ENCODE measurements at regions of chr21 and their contacts with region 1.

Region 1: GRCh38 chr21:35226948-35227744 is 178.0 kb upstream of the RUNX1 start:
- DNase-seq: no peak
- ATAC-seq: peak; percentile 86
- H3K4me3 Mint-ChIP-seq: peak overlapping the region; percentile 68
- H3K27ac Mint-ChIP-seq: peak overlapping the region; percentile 87
- H3K4me1 Mint-ChIP-seq: peaks cover 44% of the 10 kb centered on the region
- H3K27me3 Mint-ChIP-seq: peaks cover under 1% of the 10 kb centered on the region
- CTCF ChIP-seq: no peak

Region 2: GRCh38 chr21:34986561-34987500 is 240.3 kb before region 1 on chr21:
- CTCF ChIA-PET with region 1: no interaction called
- POLR2A ChIA-PET with region 1: no interaction called
- intact Hi-C with region 1: loop called (anchors 5 kb)
- DNase-seq: peak; percentile 36
- ATAC-seq: peak; percentile 74
- H3K4me3 Mint-ChIP-seq: peak overlapping the region; percentile 69
- H3K27ac Mint-ChIP-seq: peak overlapping the region; percentile 78
- H3K4me1 Mint-ChIP-seq: peaks cover 78% of the 10 kb centered on the region
- H3K27me3 Mint-ChIP-seq: no peaks in the 10 kb centered on the region
- CTCF ChIP-seq: no peak

Region 3: DNA sequence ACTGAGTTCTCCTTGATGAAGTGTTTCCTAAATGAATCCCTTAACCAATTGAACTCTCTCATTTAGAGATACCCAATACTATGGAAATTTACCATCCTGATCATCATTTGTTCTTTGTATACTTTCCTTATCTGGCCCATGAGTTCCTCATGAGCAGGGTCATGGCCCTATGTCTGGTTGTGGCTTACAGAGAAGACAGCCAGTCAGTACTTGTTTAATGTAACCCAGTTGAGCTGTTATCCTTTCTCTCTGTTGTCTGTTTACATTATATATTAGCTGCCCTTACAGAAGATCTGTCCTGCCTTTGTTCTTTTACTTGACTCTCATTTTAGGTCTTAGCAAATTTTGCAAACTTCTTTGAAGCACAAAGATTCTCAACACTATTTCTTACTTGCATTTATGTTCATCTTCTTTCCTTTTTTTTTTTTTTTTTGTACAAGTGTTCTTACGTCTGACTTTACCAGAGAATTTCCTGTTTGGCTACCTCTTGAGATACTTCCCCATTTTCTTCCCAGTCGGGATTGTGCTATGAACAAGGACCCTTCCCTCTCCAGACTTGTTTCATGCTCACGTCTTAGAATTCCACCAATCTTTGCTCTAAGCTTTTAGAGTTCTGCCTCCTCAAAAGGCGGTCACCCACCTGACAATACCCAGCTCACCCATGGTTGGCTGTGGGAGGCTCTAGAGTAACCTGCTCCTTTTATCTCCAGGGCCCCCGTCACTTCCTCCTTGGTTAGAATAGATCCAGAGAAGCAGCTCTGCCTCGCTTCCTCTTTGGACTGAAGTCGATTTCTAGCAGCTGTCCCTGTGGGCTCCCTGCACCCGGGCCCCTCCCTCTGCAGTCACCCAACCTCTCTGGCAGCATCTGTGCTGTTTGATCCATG is 124.4 kb before region 1 on chr21:
- CTCF ChIA-PET with region 1: no interaction called
- POLR2A ChIA-PET with region 1: no interaction called
- intact Hi-C with region 1: loop called (anchors 5 kb)
- DNase-seq: peak; percentile 24
- ATAC-seq: peak; percentile 94
- H3K4me3 Mint-ChIP-seq: no peak overlapping the region
- H3K27ac Mint-ChIP-seq: no peak overlapping the region
- H3K4me1 Mint-ChIP-seq: no peaks in the 10 kb centered on the region
- H3K27me3 Mint-ChIP-seq: no peaks in the 10 kb centered on the region
- CTCF ChIP-seq: no peak

Region 4: GRCh38 chr21:35204850-35205541 is 22.1 kb before region 1 on chr21:
- CTCF ChIA-PET with region 1: no interaction called
- POLR2A ChIA-PET with region 1: interaction called, 10 read pairs
- intact Hi-C with region 1: loop called (anchors 2 kb)
- DNase-seq: no peak
- ATAC-seq: peak; percentile 51
- H3K4me3 Mint-ChIP-seq: peak overlapping the region; percentile 82
- H3K27ac Mint-ChIP-seq: peak overlapping the region; percentile 81
- H3K4me1 Mint-ChIP-seq: peaks cover 33% of the 10 kb centered on the region
- H3K27me3 Mint-ChIP-seq: no peaks in the 10 kb centered on the region
- CTCF ChIP-seq: no peak

Region 5: DNA sequence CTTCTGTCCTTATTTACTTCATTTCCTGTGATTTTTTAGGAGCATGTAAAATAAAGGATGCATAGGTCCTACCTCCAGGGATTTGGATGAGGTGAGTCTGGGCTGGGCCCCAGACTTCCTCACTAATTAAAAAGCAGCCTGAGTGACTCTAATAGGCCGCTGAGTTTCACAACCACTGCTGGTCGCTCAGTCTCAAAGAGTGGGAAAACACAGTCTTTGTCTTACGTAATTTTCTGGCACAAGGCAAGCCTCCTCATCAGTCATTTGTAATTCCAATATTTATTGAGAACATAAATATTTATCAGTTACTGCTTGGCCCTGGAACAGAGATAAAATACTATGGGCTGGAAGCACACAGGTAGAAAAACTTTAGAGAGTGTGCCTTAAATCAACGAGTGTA is 17.4 kb after region 1 on chr21:
- CTCF ChIA-PET with region 1: no interaction called
- POLR2A ChIA-PET with region 1: no interaction called
- intact Hi-C with region 1: loop called (anchors 2 kb)
- DNase-seq: no peak
- ATAC-seq: no peak
- H3K4me3 Mint-ChIP-seq: no peak overlapping the region
- H3K27ac Mint-ChIP-seq: no peak overlapping the region
- H3K4me1 Mint-ChIP-seq: no peaks in the 10 kb centered on the region
- H3K27me3 Mint-ChIP-seq: peaks cover 13% of the 10 kb centered on the region
- CTCF ChIP-seq: no peak

Region 6: GRCh38 chr21:35342440-35342839 is 115.3 kb after region 1 on chr21:
- CTCF ChIA-PET with region 1: no interaction called
- POLR2A ChIA-PET with region 1: no interaction called
- intact Hi-C with region 1: loop called (anchors 2 kb)
- DNase-seq: no peak
- ATAC-seq: peak; percentile 78
- H3K4me3 Mint-ChIP-seq: peak overlapping the region; percentile 44
- H3K27ac Mint-ChIP-seq: peak overlapping the region; percentile 81
- H3K4me1 Mint-ChIP-seq: peaks cover 36% of the 10 kb centered on the region
- H3K27me3 Mint-ChIP-seq: no peaks in the 10 kb centered on the region
- CTCF ChIP-seq: no peak